A673 (cell line): ENCODE measurements at regions of chr14 and their contacts with region 1.

Region 1: GRCh38 chr14:88986146-88986841 is 161.8 kb downstream of the TTC8 start:
- DNase-seq: no peak
- H3K4me3 ChIP-seq: no peak overlapping the region
- H3K27ac ChIP-seq: no peak overlapping the region
- H3K4me1 ChIP-seq: no peaks in the 10 kb centered on the region
- H3K27me3 ChIP-seq: no peaks in the 10 kb centered on the region
- CTCF ChIP-seq: no peak

Region 2: GRCh38 chr14:89121968-89122620 is 135.8 kb after region 1 on chr14:
- CTCF ChIA-PET with region 1: no interaction called
- POLR2A ChIA-PET with region 1: no interaction called
- intact Hi-C with region 1: no loop called
- DNase-seq: no peak
- H3K4me3 ChIP-seq: no peak overlapping the region
- H3K27ac ChIP-seq: no peak overlapping the region
- H3K4me1 ChIP-seq: no peaks in the 10 kb centered on the region
- H3K27me3 ChIP-seq: no peaks in the 10 kb centered on the region
- CTCF ChIP-seq: no peak

Region 3: DNA sequence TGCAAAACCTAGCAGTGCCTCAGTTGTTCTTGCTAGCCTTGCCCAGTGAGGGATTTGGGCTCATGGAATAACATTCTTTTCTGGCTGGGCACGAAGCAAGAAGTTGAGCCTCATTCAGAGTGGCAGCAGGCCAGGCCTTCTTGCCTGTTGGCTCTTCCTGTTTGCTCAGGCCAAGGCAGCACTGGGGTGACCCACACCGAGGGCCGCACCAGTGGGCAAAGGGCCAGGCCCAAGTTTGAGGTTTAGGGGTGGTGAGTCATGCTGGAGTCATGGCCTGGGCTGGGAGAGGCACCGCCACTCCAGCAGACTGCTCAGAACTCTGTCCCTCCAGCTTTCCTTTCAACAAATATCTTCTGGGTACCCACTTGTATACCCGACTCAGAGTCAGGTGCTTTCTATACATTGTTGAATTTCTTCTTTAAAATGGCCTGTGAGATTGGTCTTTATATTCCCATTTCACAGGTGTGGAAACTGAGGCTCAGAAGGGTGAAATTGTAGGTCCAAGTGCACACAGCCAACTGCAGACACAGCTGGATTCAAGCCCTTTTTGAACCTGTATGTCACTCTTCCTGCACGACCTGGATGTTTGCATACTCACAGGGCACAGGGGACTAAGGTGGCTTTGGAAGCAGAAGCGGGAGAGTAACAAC is 151.3 kb after region 1 on chr14:
- CTCF ChIA-PET with region 1: no interaction called
- POLR2A ChIA-PET with region 1: no interaction called
- intact Hi-C with region 1: no loop called
- DNase-seq: no peak
- H3K4me3 ChIP-seq: no peak overlapping the region
- H3K27ac ChIP-seq: no peak overlapping the region
- H3K4me1 ChIP-seq: no peaks in the 10 kb centered on the region
- H3K27me3 ChIP-seq: no peaks in the 10 kb centered on the region
- CTCF ChIP-seq: no peak

Region 4: GRCh38 chr14:90087433-90087832 is 1101.1 kb after region 1 on chr14:
- CTCF ChIA-PET with region 1: no interaction called
- POLR2A ChIA-PET with region 1: interaction called, 10 read pairs
- intact Hi-C with region 1: no loop called
- DNase-seq: no peak
- H3K4me3 ChIP-seq: no peak overlapping the region
- H3K27ac ChIP-seq: no peak overlapping the region
- H3K4me1 ChIP-seq: no peaks in the 10 kb centered on the region
- H3K27me3 ChIP-seq: peaks cover 5% of the 10 kb centered on the region
- CTCF ChIP-seq: no peak